GM10248 (cell line): ENCODE measurements at regions of chr4 and their contacts with region 1.

Region 1: GRCh38 chr4:47432749-47433148 is 30.8 kb downstream of the COMMD8 start:
- DNase-seq: no peak
- CTCF ChIP-seq: no peak

Region 2: DNA sequence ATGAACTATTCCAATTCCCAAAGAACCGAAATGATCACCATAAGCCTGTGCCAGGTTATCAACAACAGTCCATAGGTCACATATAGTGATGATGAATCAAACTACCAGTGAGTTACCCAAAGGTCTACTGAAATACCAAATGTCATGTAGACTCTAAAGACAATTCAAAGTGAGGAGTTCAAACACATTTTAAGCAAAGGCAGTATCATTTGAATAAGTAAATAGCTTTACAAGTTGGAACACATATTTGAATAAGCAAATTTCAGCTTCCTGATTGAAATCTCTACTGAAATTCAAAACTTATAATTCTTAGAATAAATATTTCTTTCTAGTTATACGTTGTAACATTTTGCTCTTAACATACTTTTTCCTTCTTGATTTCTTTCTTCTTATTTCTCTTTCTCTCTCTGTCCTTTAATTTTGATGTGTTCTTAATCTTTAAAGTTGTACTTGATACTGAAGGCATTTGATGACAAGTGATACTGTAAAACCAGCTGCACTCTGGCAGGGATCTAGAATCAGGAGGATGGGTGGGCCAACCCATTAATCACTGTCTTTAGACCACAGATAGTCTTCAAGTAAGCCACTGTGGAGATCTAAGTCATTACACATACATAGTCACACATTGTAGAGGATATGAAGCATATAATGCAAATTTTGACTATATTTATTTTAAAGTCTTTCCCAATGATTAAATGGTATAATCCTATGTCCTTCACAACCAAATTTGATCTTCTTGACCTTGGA is 473.8 kb before region 1 on chr4:
- CTCF ChIA-PET with region 1: no interaction called
- POLR2A ChIA-PET with region 1: no interaction called
- DNase-seq: no peak
- CTCF ChIP-seq: no peak

Region 3: DNA sequence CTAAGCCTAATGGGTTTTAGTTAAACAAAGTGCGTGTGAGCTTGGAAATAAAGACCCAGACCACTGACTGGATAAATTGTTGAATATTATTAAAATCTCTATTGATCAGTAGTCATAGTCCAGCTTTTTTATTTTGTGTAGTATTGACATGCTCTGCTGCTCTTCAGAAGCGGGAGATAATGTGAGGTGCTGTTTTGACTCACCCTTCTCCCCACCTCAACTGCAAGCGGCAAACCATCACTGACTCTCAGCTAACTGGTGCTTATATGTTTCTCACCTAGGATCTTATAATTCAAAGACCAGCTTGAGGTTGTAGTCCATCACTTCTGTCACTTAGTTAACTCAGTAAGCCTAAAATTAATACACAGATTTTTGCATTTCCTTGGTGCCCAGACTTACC is 41.5 kb before region 1 on chr4:
- CTCF ChIA-PET with region 1: no interaction called
- POLR2A ChIA-PET with region 1: no interaction called
- DNase-seq: peak; percentile 24
- CTCF ChIP-seq: no peak

Region 4: GRCh38 chr4:47413521-47413920 is 19.2 kb before region 1 on chr4:
- CTCF ChIA-PET with region 1: interaction called, 4 read pairs
- POLR2A ChIA-PET with region 1: interaction called, 10 read pairs
- DNase-seq: no peak
- CTCF ChIP-seq: no peak

Region 5: GRCh38 chr4:47533689-47534347 is 101.1 kb after region 1 on chr4:
- CTCF ChIA-PET with region 1: no interaction called
- POLR2A ChIA-PET with region 1: no interaction called
- DNase-seq: no peak
- CTCF ChIP-seq: no peak